ENCODE measurements at regions of chr19 and their contacts with region 1.

Region 1: GRCh38 chr19:4803736-4804695 is 12.5 kb downstream of the FEM1A start:
- DNase-seq: peak; percentile 25 to 66 (median 65)
- H3K4me3 ChIP-seq: no peak overlapping the region
- H3K4me3 Mint-ChIP-seq: no peak overlapping the region
- H3K27ac ChIP-seq: no peak overlapping the region
- H3K27ac Mint-ChIP-seq: peak overlapping the region in 2 of 7 donors; percentile 8 to 60
- H3K4me1 ChIP-seq: peaks cover 31 to 37% of the 10 kb centered on the region in 2 donors
- H3K4me1 Mint-ChIP-seq: peaks cover 29% of the 10 kb centered on the region
- H3K27me3 ChIP-seq: no peaks in the 10 kb centered on the region
- H3K27me3 Mint-ChIP-seq: peaks cover 0 to 2% (median 1%) of the 10 kb centered on the region in 3 donors
- CTCF ChIP-seq: peak; percentile 83

Region 2: GRCh38 chr19:4851551-4852290 is 47.7 kb after region 1 on chr19:
- intact Hi-C with region 1: loop called in 1 of 2 experiments (anchors 5 kb)
- DNase-seq: peak; percentile 48 to 70 (median 49)
- H3K4me3 ChIP-seq: no peak overlapping the region
- H3K4me3 Mint-ChIP-seq: no peak overlapping the region
- H3K27ac ChIP-seq: no peak overlapping the region
- H3K27ac Mint-ChIP-seq: peak overlapping the region in 5 of 7 donors; percentile 30 to 94 (median 69)
- H3K4me1 ChIP-seq: no peaks in the 10 kb centered on the region
- H3K4me1 Mint-ChIP-seq: peaks cover 2% of the 10 kb centered on the region
- H3K27me3 ChIP-seq: no peaks in the 10 kb centered on the region
- H3K27me3 Mint-ChIP-seq: no peaks in the 10 kb centered on the region
- CTCF ChIP-seq: peak; percentile 86

Region 3: DNA sequence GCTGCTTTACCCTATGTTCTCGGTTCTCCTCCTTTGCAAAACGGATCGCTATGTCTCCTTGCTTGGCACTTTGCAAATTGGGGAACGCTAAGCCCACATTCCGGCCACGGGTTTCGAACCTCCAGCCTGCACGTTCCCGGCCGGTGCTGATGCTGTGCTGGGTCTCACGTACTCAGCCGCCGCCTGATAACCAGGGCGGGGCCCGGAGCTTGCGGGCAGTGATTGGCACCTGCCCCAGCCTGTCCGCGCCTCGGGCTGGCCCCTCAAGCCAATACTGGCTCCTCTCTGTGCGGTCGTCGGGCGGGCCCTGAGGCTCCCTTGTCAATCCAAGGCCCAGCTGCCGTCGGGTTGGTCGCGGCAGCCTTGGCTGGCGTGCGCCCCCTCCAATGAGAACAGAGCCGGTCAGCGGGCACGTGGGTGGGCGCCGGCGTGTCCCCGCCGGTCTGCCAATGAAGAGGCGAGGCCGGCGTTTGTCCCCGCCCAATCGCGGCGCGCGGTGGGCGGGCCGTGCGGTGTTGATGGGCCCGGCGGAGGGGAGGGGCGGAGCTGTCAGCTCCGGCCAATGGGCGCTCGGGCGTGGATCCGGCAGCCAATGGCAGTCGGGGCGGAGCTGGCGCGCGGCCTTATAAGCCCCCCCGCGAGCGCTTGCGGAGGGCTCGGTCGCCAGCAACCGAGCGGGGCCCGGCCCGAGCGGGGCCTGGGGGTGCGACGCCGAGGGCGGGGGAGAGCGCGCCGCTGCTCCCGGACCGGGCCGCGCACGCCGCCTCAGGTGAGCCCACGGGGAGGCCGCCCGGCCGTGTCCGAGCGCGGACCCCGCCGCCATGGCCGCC is 164.7 kb after region 1 on chr19 and contains the start of gene KDM4B:
- intact Hi-C with region 1: loop called in 1 of 2 experiments (anchors 10 kb)
- DNase-seq: peak; percentile 99
- H3K4me3 ChIP-seq: peak within 1 kb of the TSS; percentile 65 to 87 (median 74)
- H3K4me3 Mint-ChIP-seq: peak within 1 kb of the TSS; percentile 91 to 95
- H3K27ac ChIP-seq: peak within 1 kb of the TSS; percentile 44 to 84
- H3K27ac Mint-ChIP-seq: peak within 1 kb of the TSS; percentile 88 to 95 (median 93)
- H3K4me1 ChIP-seq: peaks cover 32 to 42% of the 10 kb centered on the region in 2 donors
- H3K4me1 Mint-ChIP-seq: peaks cover 40% of the 10 kb centered on the region
- H3K27me3 ChIP-seq: no peaks in the 10 kb centered on the region
- H3K27me3 Mint-ChIP-seq: peaks cover 0 to 4% (median 0%) of the 10 kb centered on the region in 3 donors
- CTCF ChIP-seq: no peak
- polyA plus RNA-seq, gene KDM4B: 6.4 to 22.7 (median 12.7) TPM

Measured in CD14-positive monocyte (primary cell).